GM12878 (cell line): ENCODE measurements at regions of chr3 and their contacts with region 1.

Region 1: GRCh38 chr3:167876620-167877281 is 141.2 kb downstream of the SERPINI1 start:
- DNase-seq: no peak
- ATAC-seq: no peak
- H3K4me3 ChIP-seq: no peak overlapping the region
- H3K27ac ChIP-seq: no peak overlapping the region
- H3K4me1 ChIP-seq: no peaks in the 10 kb centered on the region
- H3K27me3 ChIP-seq: no peaks in the 10 kb centered on the region
- CTCF ChIP-seq: no peak
- EP300 ChIP-seq: no peak
- POLR2A ChIP-seq: no peak
- RAD21 ChIP-seq: no peak

Region 2: GRCh38 chr3:167372138-167372537 is 504.6 kb before region 1 on chr3:
- CTCF ChIA-PET with region 1: no interaction called
- POLR2A ChIA-PET with region 1: no interaction called
- RAD21 ChIA-PET with region 1: interaction called, 3 read pairs
- SMC1A ChIA-PET with region 1: no interaction called
- in situ Hi-C with region 1: loop called (anchors 5 kb)
- intact Hi-C with region 1: no loop called
- DNase-seq: no peak
- ATAC-seq: no peak
- H3K4me3 ChIP-seq: no peak overlapping the region
- H3K27ac ChIP-seq: no peak overlapping the region
- H3K4me1 ChIP-seq: no peaks in the 10 kb centered on the region
- H3K27me3 ChIP-seq: no peaks in the 10 kb centered on the region
- CTCF ChIP-seq: no peak
- EP300 ChIP-seq: no peak
- POLR2A ChIP-seq: no peak
- RAD21 ChIP-seq: no peak

Region 3: GRCh38 chr3:167662919-167663400 is 213.8 kb before region 1 on chr3:
- CTCF ChIA-PET with region 1: no interaction called
- POLR2A ChIA-PET with region 1: no interaction called
- RAD21 ChIA-PET with region 1: no interaction called
- SMC1A ChIA-PET with region 1: no interaction called
- in situ Hi-C with region 1: no loop called
- intact Hi-C with region 1: no loop called
- DNase-seq: no peak
- ATAC-seq: no peak
- H3K4me3 ChIP-seq: no peak overlapping the region
- H3K27ac ChIP-seq: no peak overlapping the region
- H3K4me1 ChIP-seq: no peaks in the 10 kb centered on the region
- H3K27me3 ChIP-seq: no peaks in the 10 kb centered on the region; a peak in 1 of 4 replicates
- CTCF ChIP-seq: no peak
- EP300 ChIP-seq: no peak
- POLR2A ChIP-seq: no peak
- RAD21 ChIP-seq: no peak